Calu3 (cell line): ENCODE measurements at regions of chr4 and their contacts with region 1.

Region 1: DNA sequence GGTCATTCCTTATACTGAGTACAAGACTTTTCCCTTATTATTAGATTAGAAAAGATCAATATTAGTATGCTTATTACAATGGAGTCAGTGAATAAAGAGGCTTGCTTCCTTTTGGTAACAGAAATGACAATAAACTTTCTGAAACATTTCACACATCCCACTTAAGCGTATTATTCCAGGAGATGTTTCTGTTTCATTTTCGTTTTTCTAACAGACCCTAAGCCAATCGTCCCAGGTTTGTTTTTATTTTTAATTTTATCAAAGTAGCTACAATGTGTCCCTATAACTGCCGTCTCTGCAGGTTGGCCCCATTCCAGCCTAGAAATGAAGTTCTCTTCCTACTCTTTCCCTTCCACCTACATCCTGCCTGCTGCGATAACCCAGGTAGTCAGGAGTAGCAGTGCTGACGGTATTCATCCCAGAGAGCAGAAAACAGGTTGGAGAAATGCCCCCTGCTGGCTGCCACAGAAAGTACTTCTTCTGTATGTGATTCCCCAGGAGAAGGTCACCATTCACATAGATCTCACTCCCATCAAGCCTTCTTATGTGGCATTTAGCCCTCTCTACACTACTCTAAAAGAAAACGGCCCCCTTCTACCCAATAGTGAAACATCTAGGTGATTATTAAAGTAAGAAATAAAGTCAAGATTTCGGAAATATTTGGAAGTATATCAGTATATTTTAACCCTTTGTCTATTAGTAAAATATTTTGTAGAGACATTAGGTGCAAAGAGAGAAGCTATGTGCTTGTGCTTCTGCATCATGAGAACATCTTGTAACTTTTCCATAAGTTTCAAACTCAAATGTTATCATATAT is 40.4 kb downstream of the ENPEP start:
- DNase-seq: peak; percentile 80
- H3K4me3 Mint-ChIP-seq: peak overlapping the region; percentile 66
- H3K27ac Mint-ChIP-seq: peak overlapping the region; percentile 75
- H3K4me1 Mint-ChIP-seq: no peaks in the 10 kb centered on the region
- H3K27me3 Mint-ChIP-seq: no peaks in the 10 kb centered on the region
- CTCF ChIP-seq: peak; percentile 50

Region 2: DNA sequence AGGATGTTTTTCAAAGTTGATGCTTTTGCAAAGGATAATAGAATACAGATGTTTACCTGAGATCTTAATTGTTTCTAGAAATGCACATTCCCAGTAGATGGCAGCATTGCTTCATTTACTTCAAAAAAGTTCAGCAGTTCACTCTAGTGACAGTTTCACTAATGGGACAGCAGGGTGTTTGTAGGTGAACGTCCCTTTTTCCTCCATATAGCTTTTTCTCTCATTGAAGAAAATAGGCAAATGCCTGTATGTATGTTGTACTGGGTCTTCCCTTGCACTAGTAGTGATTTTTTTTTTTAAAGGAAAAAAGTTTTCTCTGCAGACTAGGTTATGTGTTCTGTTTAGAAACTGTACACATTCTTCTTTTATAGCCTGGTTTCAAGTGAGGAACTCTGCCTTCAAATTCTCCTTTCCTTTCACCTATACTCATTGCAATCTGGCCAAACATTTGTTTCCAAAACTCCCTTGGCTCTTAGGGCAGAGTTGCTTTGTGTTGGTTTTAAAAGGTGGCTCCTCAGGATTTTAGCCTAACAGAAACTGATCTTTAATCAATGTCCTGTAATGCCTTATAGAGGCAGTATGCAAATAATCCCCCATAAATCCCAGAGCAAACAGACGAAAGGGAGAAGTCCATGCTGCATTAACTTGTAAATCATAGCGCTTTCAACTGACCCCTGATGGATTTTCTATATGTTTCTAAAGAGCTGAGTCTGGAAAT is 517.3 kb before region 1 on chr4:
- CTCF ChIA-PET with region 1: interaction called, 3 read pairs
- intact Hi-C with region 1: loop called (anchors 1 kb)
- DNase-seq: peak; percentile 30
- H3K4me3 Mint-ChIP-seq: no peak overlapping the region
- H3K27ac Mint-ChIP-seq: no peak overlapping the region
- H3K4me1 Mint-ChIP-seq: no peaks in the 10 kb centered on the region
- H3K27me3 Mint-ChIP-seq: no peaks in the 10 kb centered on the region
- CTCF ChIP-seq: no peak

Region 3: DNA sequence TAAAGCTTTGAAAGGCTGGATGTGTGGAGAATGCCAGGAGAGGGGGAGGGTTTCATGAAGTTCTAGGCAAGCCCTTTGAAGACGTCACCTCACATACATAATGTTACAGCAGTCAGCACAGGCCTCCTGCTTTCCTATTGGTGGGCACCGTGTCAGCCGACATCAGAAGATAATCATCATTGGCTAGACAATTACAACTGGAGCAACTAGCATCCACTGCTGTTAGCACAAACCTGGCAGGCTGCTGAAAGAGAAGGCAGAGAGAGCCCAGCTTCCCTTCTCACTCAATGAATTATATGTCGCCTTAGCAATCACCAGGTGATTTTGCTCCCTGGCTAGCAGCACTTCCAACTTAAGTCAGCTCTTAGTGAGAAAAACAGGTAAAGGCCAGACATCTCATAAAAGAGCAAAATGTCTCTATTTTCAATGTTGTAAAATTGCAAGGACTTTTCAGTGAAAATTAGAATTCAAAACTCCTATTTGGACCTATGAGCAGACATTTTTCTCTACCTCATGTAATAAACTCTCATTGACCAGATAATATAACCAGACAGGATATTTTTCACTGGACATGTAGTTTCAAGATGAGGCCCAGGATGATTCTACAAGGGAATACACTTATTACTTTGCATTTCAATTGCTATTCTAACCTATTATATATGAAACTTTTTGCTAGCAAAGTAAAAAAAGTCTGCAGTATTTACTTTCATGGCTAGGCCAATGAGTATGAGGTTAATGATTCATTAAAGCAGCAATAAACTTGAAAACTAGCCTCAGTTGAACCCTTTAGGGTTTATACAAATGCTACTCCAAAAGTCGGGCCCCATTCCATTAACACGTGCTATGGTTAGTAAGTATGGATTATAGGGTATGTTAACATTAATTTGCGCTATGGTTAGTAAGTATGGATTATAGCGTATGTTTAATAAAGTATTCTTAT is 322.2 kb before region 1 on chr4:
- CTCF ChIA-PET with region 1: no interaction called
- intact Hi-C with region 1: loop called (anchors 10 kb)
- DNase-seq: peak; percentile 16
- H3K4me3 Mint-ChIP-seq: no peak overlapping the region
- H3K27ac Mint-ChIP-seq: no peak overlapping the region
- H3K4me1 Mint-ChIP-seq: peaks cover 27% of the 10 kb centered on the region
- H3K27me3 Mint-ChIP-seq: no peaks in the 10 kb centered on the region
- CTCF ChIP-seq: no peak

Region 4: DNA sequence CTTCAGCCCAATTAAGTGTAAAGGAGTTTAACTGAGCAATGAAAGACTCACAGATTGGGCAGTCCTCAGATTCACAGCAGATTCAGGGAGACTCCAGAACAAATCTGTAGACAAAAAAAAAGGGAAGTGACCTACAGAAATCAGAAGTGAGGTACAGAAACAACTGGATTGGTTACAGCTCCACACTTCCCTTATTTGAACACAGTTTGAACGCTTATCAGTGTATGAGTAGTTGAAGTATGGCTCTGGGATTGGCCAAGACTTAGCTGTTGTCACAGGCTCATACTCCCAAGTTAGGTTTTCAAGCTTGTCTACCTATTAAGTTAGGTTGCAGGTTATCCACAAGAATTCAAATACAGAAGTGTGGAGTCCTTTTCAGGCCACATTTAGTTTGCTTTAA is 205.5 kb before region 1 on chr4:
- CTCF ChIA-PET with region 1: no interaction called
- intact Hi-C with region 1: loop called (anchors 10 kb)
- DNase-seq: no peak
- H3K4me3 Mint-ChIP-seq: no peak overlapping the region
- H3K27ac Mint-ChIP-seq: no peak overlapping the region
- H3K4me1 Mint-ChIP-seq: no peaks in the 10 kb centered on the region
- H3K27me3 Mint-ChIP-seq: no peaks in the 10 kb centered on the region
- CTCF ChIP-seq: no peak

Region 5: GRCh38 chr4:110411574-110412011 is 104.7 kb before region 1 on chr4:
- CTCF ChIA-PET with region 1: no interaction called
- intact Hi-C with region 1: no loop called
- DNase-seq: no peak
- H3K4me3 Mint-ChIP-seq: no peak overlapping the region
- H3K27ac Mint-ChIP-seq: no peak overlapping the region
- H3K4me1 Mint-ChIP-seq: no peaks in the 10 kb centered on the region
- H3K27me3 Mint-ChIP-seq: no peaks in the 10 kb centered on the region
- CTCF ChIP-seq: no peak

Region 6: GRCh38 chr4:110586131-110586850 is 70.0 kb after region 1 on chr4:
- CTCF ChIA-PET with region 1: interaction called, 3 read pairs
- intact Hi-C with region 1: loop called (anchors 1 kb)
- DNase-seq: no peak
- H3K4me3 Mint-ChIP-seq: peak overlapping the region; percentile 77
- H3K27ac Mint-ChIP-seq: peak overlapping the region; percentile 84
- H3K4me1 Mint-ChIP-seq: no peaks in the 10 kb centered on the region
- H3K27me3 Mint-ChIP-seq: no peaks in the 10 kb centered on the region
- CTCF ChIP-seq: peak; percentile 29

Region 7: GRCh38 chr4:110730318-110730717 is 214.0 kb after region 1 on chr4:
- CTCF ChIA-PET with region 1: no interaction called
- intact Hi-C with region 1: no loop called
- DNase-seq: no peak
- H3K4me3 Mint-ChIP-seq: no peak overlapping the region
- H3K27ac Mint-ChIP-seq: no peak overlapping the region
- H3K4me1 Mint-ChIP-seq: peaks cover 11% of the 10 kb centered on the region
- H3K27me3 Mint-ChIP-seq: no peaks in the 10 kb centered on the region
- CTCF ChIP-seq: no peak

Region 8: DNA sequence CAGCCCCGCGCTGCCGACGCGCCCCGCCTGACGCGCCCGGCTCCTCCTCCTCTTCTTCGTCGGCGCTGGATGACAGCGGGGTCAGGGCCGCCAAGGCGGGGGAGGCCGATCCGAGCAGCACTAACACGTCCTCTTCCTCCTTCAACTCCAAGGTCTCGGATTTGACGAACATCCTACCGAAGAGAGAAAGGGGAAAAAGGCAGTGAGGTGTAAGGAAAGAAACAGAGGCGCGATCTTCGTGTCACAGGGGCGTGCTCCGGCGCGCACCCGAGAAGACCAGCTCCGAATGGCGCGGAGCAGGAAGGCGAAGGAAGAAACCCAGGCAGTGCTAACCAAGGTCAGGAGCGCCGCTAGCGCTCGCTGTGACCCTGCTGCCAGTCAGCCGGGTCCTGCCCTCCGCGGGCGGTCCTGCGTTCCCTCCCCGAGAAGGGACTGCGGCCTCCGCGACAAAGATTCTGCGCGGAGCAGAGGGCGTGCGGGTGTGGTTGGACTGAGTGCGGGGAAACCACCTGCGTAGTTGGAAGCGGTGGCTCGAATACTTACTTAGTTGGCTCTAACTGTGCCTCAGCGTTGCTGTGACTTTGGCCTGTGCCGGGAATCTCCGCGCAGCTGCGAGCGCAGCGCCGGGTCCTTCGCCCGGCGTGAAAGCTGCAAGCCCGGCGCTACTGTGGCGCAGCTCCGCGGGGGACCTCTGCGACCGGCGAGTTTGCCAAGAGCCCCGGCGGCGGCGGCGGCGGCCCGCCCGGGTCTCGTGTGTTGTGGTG is 1999.2 kb after region 1 on chr4:
- CTCF ChIA-PET with region 1: no interaction called
- intact Hi-C with region 1: no loop called
- DNase-seq: peak; percentile 17
- H3K4me3 Mint-ChIP-seq: peak overlapping the region; percentile 86
- H3K27ac Mint-ChIP-seq: no peak overlapping the region
- H3K4me1 Mint-ChIP-seq: peaks cover 20% of the 10 kb centered on the region
- H3K27me3 Mint-ChIP-seq: peaks cover 95% of the 10 kb centered on the region
- CTCF ChIP-seq: no peak